K562 (cell line): ENCODE measurements at regions of chr3 and their contacts with region 1.

Region 1: GRCh38 chr3:173045770-173046382 is 95.2 kb downstream of the SPATA16 start:
- DNase-seq: peak in 1 of 4 experiments; percentile 26
- ATAC-seq: no peak
- H3K4me3 ChIP-seq: no peak overlapping the region
- H3K27ac ChIP-seq: no peak overlapping the region
- H3K4me1 ChIP-seq: no peaks in the 10 kb centered on the region
- H3K27me3 ChIP-seq: no peaks in the 10 kb centered on the region
- CTCF ChIP-seq: peak in 1 of 3 experiments; percentile 52; a peak in 3 of 6 replicates
- EP300 ChIP-seq: no peak
- POLR2A ChIP-seq: no peak
- RAD21 ChIP-seq: peak; percentile 68 to 80

Region 2: GRCh38 chr3:172836390-172836997 is 209.4 kb before region 1 on chr3:
- CTCF ChIA-PET with region 1: no interaction called
- POLR2A ChIA-PET with region 1: no interaction called
- in situ Hi-C with region 1: no loop called
- intact Hi-C with region 1: loop called (anchors 5 kb)
- DNase-seq: peak; percentile 23 to 76 (median 30)
- ATAC-seq: peak; percentile 89
- H3K4me3 ChIP-seq: no peak overlapping the region
- H3K27ac ChIP-seq: no peak overlapping the region
- H3K4me1 ChIP-seq: peaks cover 0 to 4% of the 10 kb centered on the region in 2 experiments; a peak in 1 of 5 replicates
- H3K27me3 ChIP-seq: no peaks in the 10 kb centered on the region
- CTCF ChIP-seq: peak; percentile 37 to 73 (median 65); a peak in 5 of 6 replicates
- EP300 ChIP-seq: no peak
- POLR2A ChIP-seq: no peak
- RAD21 ChIP-seq: peak; percentile 76 to 89

Region 3: GRCh38 chr3:173009410-173009809 is 36.5 kb before region 1 on chr3:
- CTCF ChIA-PET with region 1: no interaction called
- POLR2A ChIA-PET with region 1: interaction called, 3 read pairs
- in situ Hi-C with region 1: no loop called
- intact Hi-C with region 1: loop called (anchors 5 kb)
- DNase-seq: no peak
- ATAC-seq: no peak; the same call in 2 of the 3 replicates
- H3K4me3 ChIP-seq: no peak overlapping the region
- H3K27ac ChIP-seq: 0 out of 3 replicates have a peak overlapping the region, but pooled peaks have one; percentile 9
- H3K4me1 ChIP-seq: peaks cover 10 to 36% of the 10 kb centered on the region in 2 experiments
- H3K27me3 ChIP-seq: no peaks in the 10 kb centered on the region
- CTCF ChIP-seq: no peak
- EP300 ChIP-seq: no peak
- POLR2A ChIP-seq: no peak
- RAD21 ChIP-seq: no peak

Region 4: GRCh38 chr3:173058229-173058628 is 12.4 kb after region 1 on chr3:
- CTCF ChIA-PET with region 1: no interaction called
- POLR2A ChIA-PET with region 1: no interaction called
- in situ Hi-C with region 1: no loop called
- intact Hi-C with region 1: no loop called
- DNase-seq: no peak
- ATAC-seq: no peak
- H3K4me3 ChIP-seq: no peak overlapping the region
- H3K27ac ChIP-seq: no peak overlapping the region
- H3K4me1 ChIP-seq: no peaks in the 10 kb centered on the region
- H3K27me3 ChIP-seq: no peaks in the 10 kb centered on the region
- CTCF ChIP-seq: no peak
- EP300 ChIP-seq: no peak
- POLR2A ChIP-seq: no peak
- RAD21 ChIP-seq: no peak

Region 5: DNA sequence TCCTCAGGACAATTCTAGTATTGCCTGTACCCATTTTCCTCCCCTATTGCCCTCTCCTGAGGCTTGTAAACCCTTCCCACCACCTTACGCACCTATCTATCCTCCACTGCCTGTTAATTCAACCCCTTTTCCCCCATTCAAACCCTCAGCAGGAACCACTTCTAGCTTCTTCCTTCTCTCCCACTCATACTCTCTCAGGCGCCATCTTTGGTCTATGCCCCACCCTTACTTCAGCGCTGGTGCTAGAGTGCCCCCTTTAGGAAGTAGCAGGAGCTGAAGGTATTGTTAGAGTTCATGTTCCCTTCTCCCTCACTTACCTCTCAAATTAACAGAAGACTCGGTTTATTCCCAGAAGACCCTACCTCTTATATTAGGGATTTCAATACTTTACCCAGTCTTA is 229.9 kb after region 1 on chr3:
- CTCF ChIA-PET with region 1: no interaction called
- POLR2A ChIA-PET with region 1: no interaction called
- in situ Hi-C with region 1: no loop called
- intact Hi-C with region 1: loop called (anchors 5 kb)
- DNase-seq: peak; percentile 41 to 51 (median 45)
- ATAC-seq: peak; percentile 95
- H3K4me3 ChIP-seq: no peak overlapping the region
- H3K27ac ChIP-seq: no peak overlapping the region
- H3K4me1 ChIP-seq: no peaks in the 10 kb centered on the region
- H3K27me3 ChIP-seq: no peaks in the 10 kb centered on the region
- CTCF ChIP-seq: peak; percentile 53 to 58 (median 54); a peak in 5 of 6 replicates
- EP300 ChIP-seq: no peak
- POLR2A ChIP-seq: no peak
- RAD21 ChIP-seq: peak; percentile 75